PC-3 (cell line): ENCODE measurements at regions of chr2 and their contacts with region 1.

Region 1: GRCh38 chr2:26011990-26012856 is 21.7 kb upstream of the RAB10 start:
- DNase-seq: peak; percentile 97
- ATAC-seq: peak; percentile 62
- H3K4me3 ChIP-seq: peak overlapping the region; percentile 55
- H3K27ac ChIP-seq: peak overlapping the region; percentile 98
- H3K4me1 ChIP-seq: peaks cover 52% of the 10 kb centered on the region
- H3K27me3 ChIP-seq: no peaks in the 10 kb centered on the region
- CTCF ChIP-seq: no peak

Region 2: DNA sequence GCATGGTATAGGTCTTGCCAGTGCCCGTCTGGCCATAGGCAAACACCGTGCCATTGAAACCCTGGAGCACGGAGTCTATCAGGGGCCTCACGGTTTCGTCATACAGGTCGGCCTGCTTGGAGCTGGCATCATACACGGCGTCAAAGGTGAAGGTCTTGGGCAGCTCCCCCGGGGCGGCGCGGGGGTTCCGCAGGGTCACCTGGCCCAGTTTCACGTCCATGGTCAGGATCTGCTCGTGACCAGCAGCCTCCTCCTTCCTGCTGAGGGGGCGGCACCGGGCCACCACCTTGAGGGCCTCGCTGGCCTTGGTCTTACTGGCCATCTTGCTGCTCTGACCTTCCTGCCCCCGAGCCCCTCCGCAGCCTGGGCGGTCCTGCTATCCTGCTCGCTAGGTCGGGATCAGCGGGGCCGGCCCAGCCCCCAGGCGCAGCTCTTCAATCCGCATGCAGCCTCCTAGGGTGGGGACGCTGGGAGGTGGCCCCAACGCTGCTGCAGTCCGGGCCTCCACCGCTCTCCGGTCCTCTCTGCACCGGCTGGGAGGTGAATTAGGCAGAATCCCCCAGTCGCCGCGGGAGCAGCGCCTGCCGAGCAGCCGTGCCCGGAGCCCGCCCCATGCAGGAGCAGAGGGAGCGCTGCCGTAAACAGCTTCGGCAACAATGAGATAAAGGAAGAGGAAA is 30.5 kb before region 1 on chr2:
- CTCF ChIA-PET with region 1: no interaction called
- POLR2A ChIA-PET with region 1: no interaction called
- intact Hi-C with region 1: no loop called
- DNase-seq: no peak
- ATAC-seq: peak; percentile 29
- H3K4me3 ChIP-seq: peak overlapping the region; percentile 88
- H3K27ac ChIP-seq: 0 out of 2 replicates have a peak overlapping the region, but pooled peaks have one; percentile 3
- H3K4me1 ChIP-seq: peaks cover 37% of the 10 kb centered on the region
- H3K27me3 ChIP-seq: no peaks in the 10 kb centered on the region
- CTCF ChIP-seq: no peak

Region 3: DNA sequence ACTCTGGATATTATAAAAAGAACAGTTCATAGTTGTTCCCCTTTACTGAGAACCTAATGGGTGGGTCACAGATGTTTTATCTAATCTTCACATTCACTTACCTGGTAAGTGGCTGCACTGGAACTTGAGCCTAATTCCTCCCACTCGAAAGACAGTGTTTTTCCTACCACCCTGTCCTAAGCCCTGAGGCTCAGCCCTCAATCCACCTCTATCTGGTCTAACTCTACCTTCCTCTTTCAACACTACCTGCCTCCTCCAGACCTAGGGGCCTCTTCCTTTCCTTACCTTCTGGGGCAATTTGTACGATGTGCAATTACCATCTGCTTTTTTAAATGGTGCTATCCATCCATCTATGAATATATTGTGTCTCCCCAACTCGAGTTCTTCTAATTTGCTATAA is 20.3 kb before region 1 on chr2:
- CTCF ChIA-PET with region 1: interaction called, 6 read pairs
- POLR2A ChIA-PET with region 1: no interaction called
- intact Hi-C with region 1: loop called (anchors 1 kb)
- DNase-seq: no peak
- ATAC-seq: peak; percentile 35
- H3K4me3 ChIP-seq: peak overlapping the region; percentile 51; the same call in 1 of the 2 replicates
- H3K27ac ChIP-seq: no peak overlapping the region
- H3K4me1 ChIP-seq: peaks cover 6% of the 10 kb centered on the region
- H3K27me3 ChIP-seq: no peaks in the 10 kb centered on the region
- CTCF ChIP-seq: no peak

Region 4: GRCh38 chr2:26033818-26034636 is 21.8 kb after region 1 on chr2 and contains the start of gene RAB10:
- CTCF ChIA-PET with region 1: no interaction called
- POLR2A ChIA-PET with region 1: interaction called, 5 read pairs
- intact Hi-C with region 1: loop called (anchors 1 kb)
- DNase-seq: peak; percentile 99
- ATAC-seq: peak; percentile 85
- H3K4me3 ChIP-seq: peak within 1 kb of the TSS; percentile 85
- H3K27ac ChIP-seq: peak within 1 kb of the TSS; percentile 95
- H3K4me1 ChIP-seq: peaks cover 10% of the 10 kb centered on the region
- H3K27me3 ChIP-seq: no peaks in the 10 kb centered on the region
- CTCF ChIP-seq: no peak
- total RNA-seq, gene RAB10: 138 and 149 TPM in 2 replicates

Region 5: GRCh38 chr2:26068602-26069298 is 56.5 kb after region 1 on chr2:
- CTCF ChIA-PET with region 1: no interaction called
- POLR2A ChIA-PET with region 1: no interaction called
- intact Hi-C with region 1: loop called (anchors 5 kb)
- DNase-seq: peak; percentile 91
- ATAC-seq: peak; percentile 92
- H3K4me3 ChIP-seq: peak overlapping the region; percentile 41
- H3K27ac ChIP-seq: peak overlapping the region; percentile 85
- H3K4me1 ChIP-seq: peaks cover 39% of the 10 kb centered on the region
- H3K27me3 ChIP-seq: no peaks in the 10 kb centered on the region
- CTCF ChIP-seq: no peak

Region 6: DNA sequence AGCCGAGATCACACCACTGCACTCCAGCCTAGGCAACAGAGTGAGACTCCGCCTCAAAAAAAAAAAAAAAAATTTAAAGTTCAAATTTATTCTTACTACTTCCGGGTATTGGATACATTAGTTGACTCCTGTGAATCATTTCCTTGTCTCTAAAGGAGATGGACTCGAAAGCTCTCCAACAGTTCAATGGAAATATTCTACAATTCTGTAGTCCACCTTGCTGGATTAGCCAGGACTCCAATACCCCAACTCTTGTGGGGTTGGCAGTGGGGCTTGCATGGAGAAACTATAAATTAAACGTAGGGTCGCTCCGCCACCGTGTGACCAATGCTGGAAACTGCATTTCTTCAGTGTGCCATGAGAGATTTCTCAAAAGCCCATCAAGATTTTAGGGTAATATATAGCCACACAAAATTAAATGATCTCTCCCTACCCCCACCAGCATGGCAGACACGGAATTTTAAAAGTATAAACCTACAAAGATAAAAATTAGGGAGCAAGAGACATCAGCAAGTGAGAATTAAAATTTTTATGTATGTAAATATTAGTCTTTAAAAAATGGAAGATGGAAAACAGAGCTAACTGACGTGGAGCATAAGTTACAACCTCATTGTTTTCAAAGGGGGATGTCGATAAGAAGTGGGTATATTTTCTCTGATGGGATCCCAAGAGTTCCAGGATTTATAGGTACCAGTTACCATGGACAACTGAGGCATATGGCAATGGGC is 132.9 kb after region 1 on chr2:
- CTCF ChIA-PET with region 1: no interaction called
- POLR2A ChIA-PET with region 1: no interaction called
- intact Hi-C with region 1: no loop called
- DNase-seq: peak; percentile 80
- ATAC-seq: peak; percentile 39
- H3K4me3 ChIP-seq: no peak overlapping the region
- H3K27ac ChIP-seq: no peak overlapping the region
- H3K4me1 ChIP-seq: peaks cover 18% of the 10 kb centered on the region
- H3K27me3 ChIP-seq: no peaks in the 10 kb centered on the region
- CTCF ChIP-seq: peak; percentile 92